ENCODE measurements at regions of chr7 and their contacts with region 1.

Region 1: GRCh38 chr7:56074371-56074791 is 10.3 kb downstream of the SUMF2 start:
- DNase-seq: peak; percentile 91
- ATAC-seq: peak; percentile 90

Region 2: GRCh38 chr7:55641273-55641691 is 433.1 kb before region 1 on chr7:
- intact Hi-C with region 1: loop called (anchors 10 kb)
- DNase-seq: no peak
- ATAC-seq: peak; percentile 93

Region 3: DNA sequence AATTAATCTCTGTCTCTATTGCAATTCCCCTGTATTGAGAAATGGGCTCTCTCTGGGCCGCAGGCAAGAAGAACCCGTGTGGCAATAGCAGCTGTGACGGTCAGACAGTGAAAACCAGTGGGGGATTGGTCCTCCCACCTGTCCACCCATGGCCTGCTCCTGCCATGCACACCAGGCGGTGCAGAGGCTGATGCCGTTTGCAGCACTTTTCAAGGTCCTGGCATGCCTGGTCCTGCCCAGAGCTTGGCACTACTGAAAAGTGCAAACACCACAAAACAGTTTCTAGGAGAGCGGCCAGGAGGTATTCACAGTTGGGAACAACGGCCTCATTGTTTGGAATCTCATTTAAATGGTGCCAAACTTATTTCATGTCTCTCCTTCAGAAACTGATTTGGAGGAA is 64.7 kb before region 1 on chr7:
- intact Hi-C with region 1: loop called (anchors 10 kb)
- DNase-seq: no peak
- ATAC-seq: peak; percentile 83

Region 4: GRCh38 chr7:56238441-56238840 is 164.1 kb after region 1 on chr7:
- intact Hi-C with region 1: no loop called
- DNase-seq: no peak
- ATAC-seq: no peak

Region 5: GRCh38 chr7:56256108-56256507 is 181.7 kb after region 1 on chr7:
- intact Hi-C with region 1: no loop called
- DNase-seq: no peak
- ATAC-seq: no peak